Heart left ventricle (tissue), 16 donors: ENCODE measurements at regions of chr17 and their contacts with region 1.

Region 1: GRCh38 chr17:64117981-64118979 is 11.7 kb downstream of the ERN1 start:
- DNase-seq: peak in 4 of 5 donors; percentile 29 to 55 (median 37)
- ATAC-seq: peak; percentile 64 to 83 (median 80)
- H3K4me3 ChIP-seq: peak overlapping the region in 1 of 12 donors; percentile 12
- H3K27ac ChIP-seq: peak overlapping the region in 8 of 12 donors; percentile 8 to 65 (median 22)
- H3K4me1 ChIP-seq: peaks cover 7 to 68% (median 23%) of the 10 kb centered on the region in 12 donors
- H3K27me3 ChIP-seq: no peaks in the 10 kb centered on the region
- CTCF ChIP-seq: no peak
- POLR2A ChIP-seq: no peak

Region 2: GRCh38 chr17:64036198-64036922 is 81.9 kb before region 1 on chr17:
- intact Hi-C with region 1: loop called in 3 of 10 experiments (anchors 5 kb)
- DNase-seq: no peak
- ATAC-seq: no peak
- H3K4me3 ChIP-seq: no peak overlapping the region
- H3K27ac ChIP-seq: no peak overlapping the region
- H3K4me1 ChIP-seq: no peaks in the 10 kb centered on the region
- H3K27me3 ChIP-seq: no peaks in the 10 kb centered on the region
- CTCF ChIP-seq: no peak
- POLR2A ChIP-seq: no peak

Region 3: DNA sequence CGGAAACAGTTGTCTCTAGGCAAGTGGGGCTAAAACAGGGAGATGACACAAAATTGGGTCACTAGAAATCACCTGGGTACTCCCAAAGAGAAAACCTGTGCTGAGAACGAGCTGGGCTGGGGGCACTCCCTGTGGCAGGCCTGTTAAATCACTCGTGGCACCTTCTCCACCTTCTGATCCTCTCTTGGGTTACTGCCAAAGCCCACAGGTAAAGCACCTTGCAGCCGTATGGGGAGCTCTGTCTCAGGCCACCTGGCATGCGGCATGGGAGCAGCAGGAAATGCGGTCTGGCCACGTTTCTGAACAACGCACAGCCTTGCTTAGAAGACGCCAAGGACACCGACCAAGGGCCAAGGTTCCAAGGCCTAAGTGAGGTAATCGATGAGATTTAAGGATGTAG is 76.4 kb before region 1 on chr17:
- intact Hi-C with region 1: loop called in 3 of 10 experiments (anchors 5 kb)
- DNase-seq: no peak
- ATAC-seq: no peak
- H3K4me3 ChIP-seq: no peak overlapping the region
- H3K27ac ChIP-seq: no peak overlapping the region
- H3K4me1 ChIP-seq: no peaks in the 10 kb centered on the region
- H3K27me3 ChIP-seq: no peaks in the 10 kb centered on the region
- CTCF ChIP-seq: no peak
- POLR2A ChIP-seq: no peak

Region 4: GRCh38 chr17:64081802-64082799 is 36.2 kb before region 1 on chr17:
- intact Hi-C with region 1: loop called in 3 of 10 experiments (anchors 5 kb)
- DNase-seq: no peak
- ATAC-seq: peak in 2 of 4 donors; percentile 36 to 59
- H3K4me3 ChIP-seq: no peak overlapping the region
- H3K27ac ChIP-seq: peak overlapping the region in 1 of 12 donors; percentile 70
- H3K4me1 ChIP-seq: peaks cover 0 to 49% (median 11%) of the 10 kb centered on the region in 12 donors
- H3K27me3 ChIP-seq: no peaks in the 10 kb centered on the region
- CTCF ChIP-seq: no peak
- POLR2A ChIP-seq: no peak

Region 5: DNA sequence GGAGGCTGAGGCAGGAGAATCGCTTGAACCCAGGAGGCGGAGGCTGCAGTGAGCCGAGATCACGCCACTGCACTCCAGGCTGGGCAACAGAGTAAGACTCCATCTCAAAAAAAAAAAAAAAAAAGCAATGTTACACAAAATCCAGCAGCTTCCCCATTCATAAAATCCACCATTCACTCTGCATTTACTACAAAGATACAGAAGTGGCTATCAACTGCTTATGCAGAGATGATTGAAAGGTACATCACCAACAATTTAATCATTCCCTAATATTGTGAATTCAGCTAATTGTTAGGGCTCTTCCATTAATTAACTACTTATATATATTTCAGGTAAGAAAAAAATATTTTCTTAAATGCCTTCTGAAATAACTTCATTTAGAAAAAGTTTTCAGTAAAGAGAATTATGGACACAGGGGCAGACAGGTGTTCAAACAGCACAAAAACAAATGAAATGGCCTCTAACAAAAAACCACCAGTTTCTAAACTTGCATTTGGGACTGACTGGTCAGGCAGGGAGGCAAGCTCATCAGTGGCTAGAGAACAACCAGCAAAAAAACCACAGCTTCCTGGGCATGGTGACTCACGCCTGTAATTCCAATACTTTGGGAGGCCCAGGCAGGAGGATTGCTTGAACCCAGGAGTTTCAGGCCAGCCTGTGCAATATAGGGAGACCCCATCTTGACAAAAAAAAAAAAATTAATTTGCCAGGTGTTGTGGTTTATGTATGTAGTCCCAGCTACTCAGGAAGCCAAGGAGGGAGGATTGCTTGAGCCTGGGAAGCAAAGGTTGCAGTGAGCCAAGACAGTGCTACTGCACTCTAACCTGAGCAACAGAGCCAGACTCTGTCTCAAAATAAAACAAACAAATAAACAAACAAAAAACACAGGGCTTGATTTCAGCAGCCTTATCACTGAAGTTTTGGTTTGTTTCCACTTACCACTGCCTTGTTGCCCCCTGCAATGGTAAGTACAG is 14.6 kb before region 1 on chr17:
- intact Hi-C with region 1: no loop called
- DNase-seq: no peak
- ATAC-seq: no peak
- H3K4me3 ChIP-seq: no peak overlapping the region
- H3K27ac ChIP-seq: no peak overlapping the region
- H3K4me1 ChIP-seq: peaks cover 0 to 22% (median 2%) of the 10 kb centered on the region in 12 donors
- H3K27me3 ChIP-seq: no peaks in the 10 kb centered on the region
- CTCF ChIP-seq: no peak
- POLR2A ChIP-seq: no peak